ENCODE measurements at regions of chr15 and their contacts with region 1.

Region 1: GRCh38 chr15:85858586-85859375 is 64.1 kb upstream of the KLHL25 start:
- DNase-seq: peak in 1 of 2 experiments; percentile 57
- H3K4me3 ChIP-seq: no peak overlapping the region
- H3K27ac ChIP-seq: no peak overlapping the region
- H3K4me1 ChIP-seq: no peaks in the 10 kb centered on the region
- H3K27me3 ChIP-seq: peaks cover 41% of the 10 kb centered on the region
- CTCF ChIP-seq: peak; percentile 87

Region 2: DNA sequence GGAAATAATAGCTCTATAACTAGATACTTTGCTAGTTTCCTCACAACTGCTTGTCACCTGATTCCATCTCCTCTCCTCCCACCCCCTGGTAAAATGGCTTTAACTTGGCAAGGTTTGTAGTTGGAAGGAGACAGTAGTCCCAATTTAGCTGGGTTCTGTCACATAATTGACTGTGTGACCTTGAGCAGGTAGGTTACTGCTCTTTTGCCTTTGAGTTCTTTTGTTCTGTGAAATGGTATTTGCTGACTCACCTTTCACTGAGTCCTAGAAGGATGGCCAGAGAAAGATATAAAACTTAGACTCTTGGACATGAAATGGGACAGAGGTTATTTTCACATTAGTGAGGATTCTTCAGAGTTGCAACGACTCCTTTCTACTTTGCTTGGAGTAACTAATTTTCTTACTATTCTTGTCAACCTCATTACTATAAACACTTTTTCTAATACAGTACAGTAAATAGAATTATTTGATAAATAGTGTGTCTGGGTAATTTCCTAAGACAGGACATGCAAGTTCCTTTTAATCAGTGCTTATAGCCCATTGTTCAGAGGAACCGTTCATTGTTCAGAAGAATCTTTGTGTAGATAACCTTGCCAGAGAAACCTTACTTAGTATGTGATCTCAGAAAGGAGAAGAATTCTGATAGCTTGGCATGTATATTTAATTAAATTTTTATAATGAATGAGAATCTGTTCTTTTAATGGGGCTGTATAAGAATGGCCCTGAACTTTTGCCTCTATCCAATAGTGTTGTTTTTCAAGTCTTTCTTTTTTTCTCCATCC is 464.0 kb before region 1 on chr15:
- CTCF ChIA-PET with region 1: interaction called, 18 read pairs
- POLR2A ChIA-PET with region 1: no interaction called
- intact Hi-C with region 1: no loop called
- DNase-seq: peak in 1 of 2 experiments; percentile 41
- H3K4me3 ChIP-seq: no peak overlapping the region
- H3K27ac ChIP-seq: peak overlapping the region; percentile 58
- H3K4me1 ChIP-seq: peaks cover 32% of the 10 kb centered on the region
- H3K27me3 ChIP-seq: no peaks in the 10 kb centered on the region
- CTCF ChIP-seq: no peak

Region 3: GRCh38 chr15:85813234-85813633 is 45.5 kb before region 1 on chr15:
- CTCF ChIA-PET with region 1: no interaction called
- POLR2A ChIA-PET with region 1: no interaction called
- intact Hi-C with region 1: no loop called
- DNase-seq: no peak
- H3K4me3 ChIP-seq: no peak overlapping the region
- H3K27ac ChIP-seq: no peak overlapping the region
- H3K4me1 ChIP-seq: no peaks in the 10 kb centered on the region
- H3K27me3 ChIP-seq: no peaks in the 10 kb centered on the region
- CTCF ChIP-seq: no peak

Region 4: GRCh38 chr15:85825692-85826091 is 33.1 kb before region 1 on chr15:
- CTCF ChIA-PET with region 1: no interaction called
- POLR2A ChIA-PET with region 1: no interaction called
- intact Hi-C with region 1: no loop called
- DNase-seq: no peak
- H3K4me3 ChIP-seq: no peak overlapping the region
- H3K27ac ChIP-seq: no peak overlapping the region
- H3K4me1 ChIP-seq: no peaks in the 10 kb centered on the region
- H3K27me3 ChIP-seq: no peaks in the 10 kb centered on the region
- CTCF ChIP-seq: no peak

Region 5: DNA sequence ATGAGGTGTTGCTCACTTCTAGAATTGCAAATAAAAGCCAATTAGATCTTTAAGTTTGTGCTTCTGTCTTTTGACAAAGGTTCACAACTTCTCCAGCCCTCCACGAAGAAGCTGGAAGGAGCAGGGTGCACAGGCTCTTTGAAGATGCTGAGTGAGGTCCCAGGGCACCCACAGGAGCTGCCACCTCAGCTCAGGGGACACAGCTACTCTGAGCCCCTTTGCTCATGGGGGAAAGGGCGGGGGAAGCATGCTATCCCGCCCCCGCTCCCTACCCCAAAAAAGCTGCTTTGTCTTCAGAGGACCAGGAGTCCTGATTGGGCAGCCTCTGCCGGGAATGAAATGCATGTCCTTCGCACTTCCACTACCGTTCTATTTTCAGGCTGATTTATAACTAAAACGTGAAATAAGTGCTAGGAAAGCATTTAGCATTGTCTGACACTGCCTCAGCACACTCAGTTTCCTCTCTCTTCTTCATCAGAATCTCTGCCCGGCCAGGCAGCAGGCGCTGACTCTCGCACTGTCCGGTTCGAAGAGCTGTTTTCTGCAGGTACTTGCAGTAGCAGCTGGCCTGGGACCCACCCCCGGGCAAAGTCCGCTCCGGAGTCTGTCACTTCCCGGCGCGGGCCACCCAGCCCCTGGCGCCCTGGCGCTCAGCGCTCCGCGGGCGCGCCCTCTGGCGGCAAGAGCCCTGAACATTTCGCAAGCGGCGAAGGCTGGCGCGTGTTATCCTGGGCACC is 18.5 kb before region 1 on chr15:
- CTCF ChIA-PET with region 1: interaction called, 17 read pairs
- POLR2A ChIA-PET with region 1: no interaction called
- intact Hi-C with region 1: no loop called
- DNase-seq: peak; percentile 62 to 86
- H3K4me3 ChIP-seq: peak overlapping the region; percentile 30; the same call in 1 of the 2 replicates
- H3K27ac ChIP-seq: no peak overlapping the region
- H3K4me1 ChIP-seq: peaks cover 12% of the 10 kb centered on the region
- H3K27me3 ChIP-seq: peaks cover 4% of the 10 kb centered on the region; the same call in 1 of the 2 replicates
- CTCF ChIP-seq: peak; percentile 92

Region 6: GRCh38 chr15:86329311-86330013 is 470.7 kb after region 1 on chr15:
- CTCF ChIA-PET with region 1: interaction called, 32 read pairs
- POLR2A ChIA-PET with region 1: no interaction called
- intact Hi-C with region 1: no loop called
- DNase-seq: no peak
- H3K4me3 ChIP-seq: no peak overlapping the region
- H3K27ac ChIP-seq: no peak overlapping the region
- H3K4me1 ChIP-seq: no peaks in the 10 kb centered on the region
- H3K27me3 ChIP-seq: no peaks in the 10 kb centered on the region
- CTCF ChIP-seq: no peak

Region 7: DNA sequence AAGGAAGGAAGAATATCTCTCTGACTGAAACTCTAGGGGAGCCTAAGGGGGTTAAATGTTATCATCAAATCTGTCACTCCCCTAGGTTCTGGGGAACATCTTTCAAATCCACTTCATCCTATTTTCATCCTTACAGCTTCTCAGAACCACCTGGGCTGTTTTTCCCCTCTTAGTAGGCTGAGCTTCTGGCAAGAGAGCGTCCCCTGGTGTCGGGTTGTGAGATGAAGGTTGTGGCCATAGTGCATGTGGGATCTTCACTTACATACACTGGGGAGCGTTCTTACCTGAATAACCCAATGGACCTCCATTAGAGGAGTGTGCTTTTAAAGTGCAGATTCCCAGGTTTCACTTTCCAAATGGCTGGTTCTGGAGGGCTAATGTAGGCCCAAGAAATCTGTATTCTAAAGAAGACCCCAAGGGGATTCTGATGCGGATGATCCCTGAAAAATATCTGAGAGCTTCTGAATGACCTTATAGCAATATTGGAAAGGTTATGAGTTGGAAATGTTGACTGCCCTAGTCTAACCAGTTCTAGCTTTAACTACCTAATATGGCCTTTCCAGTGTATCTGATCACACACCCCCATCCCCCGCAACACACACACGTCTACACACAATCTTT is 884.6 kb after region 1 on chr15:
- CTCF ChIA-PET with region 1: interaction called, 3 read pairs
- POLR2A ChIA-PET with region 1: no interaction called
- intact Hi-C with region 1: loop called (anchors 10 kb)
- DNase-seq: peak in 1 of 2 experiments; percentile 2
- H3K4me3 ChIP-seq: no peak overlapping the region
- H3K27ac ChIP-seq: no peak overlapping the region
- H3K4me1 ChIP-seq: no peaks in the 10 kb centered on the region
- H3K27me3 ChIP-seq: no peaks in the 10 kb centered on the region
- CTCF ChIP-seq: peak; percentile 64

Measured in PC-9 (cell line).